Activated naive CD4-positive, alpha-beta T cell treated with anti-CD3 and anti-CD28 coated beads for 36 hours (primary cell): ENCODE measurements at regions of chr2 and their contacts with region 1.

Region 1: GRCh38 chr2:230793572-230794359 is 71.0 kb upstream of the ITM2C start:
- DNase-seq: peak; percentile 89
- H3K4me3 Mint-ChIP-seq: peak overlapping the region; percentile 56
- H3K27ac Mint-ChIP-seq: no peak overlapping the region
- H3K4me1 Mint-ChIP-seq: peaks cover 52% of the 10 kb centered on the region
- H3K27me3 Mint-ChIP-seq: no peaks in the 10 kb centered on the region

Region 2: DNA sequence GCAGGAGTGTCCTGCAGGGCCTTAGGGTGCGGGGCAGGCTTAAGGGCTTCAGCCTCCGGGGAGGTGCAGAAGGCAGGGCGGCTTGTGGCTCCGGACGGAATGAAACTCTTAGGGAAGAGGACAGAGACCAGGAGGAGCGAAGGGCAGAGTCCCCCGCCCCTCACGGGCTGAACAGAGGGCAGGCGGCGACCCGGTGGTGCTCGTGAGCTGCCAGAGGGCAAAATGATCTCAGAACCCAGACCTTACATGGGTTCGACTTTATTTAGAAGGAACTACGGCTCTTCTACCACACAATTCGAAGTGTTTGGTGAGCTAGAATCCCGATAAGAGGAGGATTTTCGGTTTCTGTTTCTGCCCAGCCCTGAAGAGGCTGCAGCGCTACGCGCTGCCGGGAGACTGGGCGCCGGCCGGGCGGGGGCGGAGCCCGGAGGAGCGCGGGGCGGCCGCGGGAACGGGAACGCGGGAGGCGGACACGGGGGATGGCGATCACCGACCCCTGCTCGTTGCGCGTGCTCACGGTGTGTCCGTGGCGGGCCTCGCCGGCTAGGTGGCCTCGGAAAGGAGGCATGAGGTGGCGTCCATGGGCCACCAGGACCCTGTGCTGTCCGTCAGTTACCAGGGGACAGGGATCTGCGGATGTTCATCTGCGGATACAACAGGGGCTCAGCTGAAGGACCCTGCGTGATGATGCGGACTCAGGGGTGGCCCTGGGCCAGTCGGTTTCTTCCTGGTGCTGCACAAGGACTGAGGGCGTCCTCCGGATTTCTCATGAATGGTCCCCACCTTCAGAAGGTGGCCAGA is 382.0 kb before region 1 on chr2:
- CTCF ChIA-PET with region 1: interaction called, 3 read pairs
- intact Hi-C with region 1: loop called (anchors 2 kb)
- DNase-seq: peak; percentile 68
- H3K4me3 Mint-ChIP-seq: peak overlapping the region; percentile 90
- H3K27ac Mint-ChIP-seq: peak overlapping the region; percentile 85
- H3K4me1 Mint-ChIP-seq: peaks cover 72% of the 10 kb centered on the region
- H3K27me3 Mint-ChIP-seq: no peaks in the 10 kb centered on the region

Region 3: DNA sequence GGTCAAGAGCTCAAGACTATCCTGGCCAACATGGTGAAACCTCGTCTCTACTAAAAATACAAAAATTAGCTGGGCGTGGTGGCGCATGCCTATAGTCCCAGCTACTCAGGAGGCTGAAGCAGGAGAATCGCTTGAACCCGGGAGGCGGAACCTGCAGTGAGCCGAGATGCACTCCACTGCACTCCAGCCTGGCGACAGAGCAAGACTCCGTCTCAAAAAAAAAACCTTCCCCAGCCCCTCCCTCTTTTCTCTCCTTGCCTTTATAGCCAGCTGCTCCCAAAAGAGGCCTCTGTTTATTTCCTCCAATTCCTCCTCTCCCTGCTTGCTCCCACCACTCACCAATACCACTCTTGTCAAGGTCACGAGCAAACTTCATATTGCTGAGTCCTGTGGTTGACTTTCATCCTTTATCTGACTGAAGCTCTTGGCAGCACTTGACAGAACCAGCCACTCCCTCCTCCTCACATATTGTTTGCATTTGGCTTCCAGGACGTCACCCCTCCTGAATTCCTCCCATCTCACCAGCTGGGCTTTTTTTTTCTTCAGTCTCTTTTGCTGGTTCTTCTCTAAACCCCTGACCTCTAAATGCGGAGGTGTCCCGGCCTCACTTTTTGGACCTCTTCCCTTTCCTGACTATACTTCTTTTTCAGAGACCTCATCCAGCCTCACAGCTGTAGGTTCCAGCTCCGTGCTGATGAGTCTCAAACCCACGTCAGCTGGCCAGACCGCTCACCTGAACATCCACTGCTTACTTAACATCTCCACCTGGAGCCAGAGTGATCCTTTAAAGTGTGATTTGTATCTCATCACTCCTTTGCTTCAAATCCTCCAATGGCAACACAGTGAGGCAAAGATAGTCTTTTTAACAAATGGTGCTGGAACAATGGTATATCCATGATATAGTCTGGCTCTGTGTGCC is 165.7 kb before region 1 on chr2:
- CTCF ChIA-PET with region 1: no interaction called
- intact Hi-C with region 1: no loop called
- DNase-seq: no peak
- H3K4me3 Mint-ChIP-seq: no peak overlapping the region
- H3K27ac Mint-ChIP-seq: no peak overlapping the region
- H3K4me1 Mint-ChIP-seq: peaks cover 17% of the 10 kb centered on the region
- H3K27me3 Mint-ChIP-seq: no peaks in the 10 kb centered on the region

Region 4: DNA sequence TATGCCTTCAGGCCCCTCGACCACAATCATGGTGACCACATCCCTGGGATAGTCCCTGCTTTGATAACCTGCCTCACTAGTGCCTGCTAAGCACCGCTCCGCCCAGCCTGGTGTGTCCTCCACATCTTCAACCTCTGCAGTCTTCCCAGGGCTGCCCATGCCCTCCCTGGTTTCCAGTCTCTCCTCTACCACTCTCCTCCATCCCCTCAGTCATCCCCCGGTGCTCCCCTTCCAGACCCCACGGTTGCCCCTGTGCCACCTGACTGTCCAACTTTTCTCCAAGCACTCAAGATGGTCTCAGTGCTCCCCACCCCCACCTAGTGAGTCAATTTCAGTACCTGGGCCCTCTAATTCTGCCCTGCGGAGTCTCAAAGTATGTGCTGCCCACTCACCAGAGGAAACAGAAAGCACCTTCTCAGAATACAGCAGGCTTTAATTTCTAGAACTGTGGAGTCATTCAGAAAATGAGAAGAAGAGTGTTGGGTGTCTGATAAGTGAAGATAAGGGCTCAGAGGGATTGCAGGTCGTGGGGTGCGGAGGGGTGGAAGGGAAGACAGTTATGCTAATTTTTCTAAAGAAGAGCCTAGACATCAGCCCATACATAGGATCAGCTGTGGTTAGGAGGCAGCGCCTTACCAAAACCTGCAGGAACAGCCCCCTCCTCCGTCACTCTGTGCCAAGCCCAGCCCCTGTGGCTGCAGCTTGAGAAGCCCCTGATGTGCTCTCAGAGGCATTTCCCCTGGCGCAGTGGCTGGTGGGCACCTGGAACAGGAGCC is 134.7 kb before region 1 on chr2:
- CTCF ChIA-PET with region 1: interaction called, 6 read pairs
- intact Hi-C with region 1: loop called (anchors 1 kb)
- DNase-seq: peak; percentile 87
- H3K4me3 Mint-ChIP-seq: peak overlapping the region; percentile 73
- H3K27ac Mint-ChIP-seq: peak overlapping the region; percentile 94
- H3K4me1 Mint-ChIP-seq: peaks cover 86% of the 10 kb centered on the region
- H3K27me3 Mint-ChIP-seq: no peaks in the 10 kb centered on the region

Region 5: GRCh38 chr2:230721712-230722111 is 72.1 kb before region 1 on chr2:
- CTCF ChIA-PET with region 1: interaction called, 23 read pairs
- intact Hi-C with region 1: loop called (anchors 2 kb)
- DNase-seq: peak; percentile 43
- H3K4me3 Mint-ChIP-seq: peak overlapping the region; percentile 4
- H3K27ac Mint-ChIP-seq: peak overlapping the region; percentile 76
- H3K4me1 Mint-ChIP-seq: peaks cover 87% of the 10 kb centered on the region
- H3K27me3 Mint-ChIP-seq: no peaks in the 10 kb centered on the region

Region 6: DNA sequence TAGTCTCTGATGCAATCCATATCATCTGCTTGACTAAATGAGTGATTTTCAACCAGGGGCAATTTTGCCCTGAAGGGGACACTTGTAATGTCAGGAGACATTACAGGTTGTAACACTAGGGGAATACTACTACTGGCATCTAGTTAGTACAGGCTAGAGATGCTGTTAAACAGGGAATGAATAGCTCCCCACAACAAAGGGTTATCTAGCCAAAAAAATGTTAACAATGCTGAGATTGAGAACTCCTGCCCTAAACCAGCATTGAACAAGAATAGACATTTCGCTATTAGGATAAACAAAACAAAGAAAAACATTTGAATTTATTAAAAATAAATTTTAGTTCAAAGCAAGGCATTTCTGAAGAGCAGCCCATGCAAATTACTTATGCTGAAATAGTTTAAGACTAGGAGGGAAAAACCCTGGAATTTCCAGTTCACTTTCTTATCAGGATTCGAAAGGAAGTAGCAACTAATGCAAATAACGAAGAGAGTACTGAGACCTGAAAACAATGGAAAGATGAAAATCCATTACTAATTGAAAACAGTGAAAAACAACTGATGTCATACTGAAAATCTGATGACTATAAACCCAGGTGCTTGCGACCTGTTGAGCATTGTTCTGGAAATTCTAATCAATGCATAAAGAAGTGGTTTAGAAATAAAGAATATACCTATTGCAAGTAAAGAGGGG is 28.0 kb before region 1 on chr2:
- CTCF ChIA-PET with region 1: interaction called, 18 read pairs
- intact Hi-C with region 1: loop called (anchors 1 kb)
- DNase-seq: no peak
- H3K4me3 Mint-ChIP-seq: no peak overlapping the region
- H3K27ac Mint-ChIP-seq: peak overlapping the region; percentile 85
- H3K4me1 Mint-ChIP-seq: peaks cover 64% of the 10 kb centered on the region
- H3K27me3 Mint-ChIP-seq: no peaks in the 10 kb centered on the region